MCF 10A (cell line): ENCODE measurements at regions of chr3 and their contacts with region 1.

Region 1: DNA sequence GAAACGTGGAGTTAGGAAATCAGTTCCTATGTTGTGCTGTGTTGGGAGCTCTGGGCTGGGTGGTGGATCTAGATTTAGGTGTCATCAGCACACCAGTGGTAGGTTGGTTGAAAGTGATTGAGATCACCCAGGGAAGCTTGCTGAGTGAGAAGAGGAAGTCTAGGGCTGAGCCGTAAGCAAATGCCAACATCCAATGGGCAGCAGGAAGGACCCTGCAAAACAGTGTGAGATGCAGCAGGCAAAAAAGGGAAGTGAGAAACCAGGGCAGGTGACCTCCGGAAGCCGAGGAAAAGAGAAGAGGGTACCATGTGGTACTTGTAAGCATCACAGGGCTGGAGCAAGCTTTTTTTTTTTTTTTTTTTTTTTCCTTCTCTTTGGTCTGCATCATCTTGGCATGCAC is 15.9 kb upstream of the COPG1 start:
- DNase-seq: no peak
- H3K4me3 Mint-ChIP-seq: no peak overlapping the region
- H3K27ac Mint-ChIP-seq: no peak overlapping the region
- H3K4me1 Mint-ChIP-seq: peaks cover 28% of the 10 kb centered on the region
- H3K27me3 Mint-ChIP-seq: no peaks in the 10 kb centered on the region
- CTCF ChIP-seq: no peak

Region 2: DNA sequence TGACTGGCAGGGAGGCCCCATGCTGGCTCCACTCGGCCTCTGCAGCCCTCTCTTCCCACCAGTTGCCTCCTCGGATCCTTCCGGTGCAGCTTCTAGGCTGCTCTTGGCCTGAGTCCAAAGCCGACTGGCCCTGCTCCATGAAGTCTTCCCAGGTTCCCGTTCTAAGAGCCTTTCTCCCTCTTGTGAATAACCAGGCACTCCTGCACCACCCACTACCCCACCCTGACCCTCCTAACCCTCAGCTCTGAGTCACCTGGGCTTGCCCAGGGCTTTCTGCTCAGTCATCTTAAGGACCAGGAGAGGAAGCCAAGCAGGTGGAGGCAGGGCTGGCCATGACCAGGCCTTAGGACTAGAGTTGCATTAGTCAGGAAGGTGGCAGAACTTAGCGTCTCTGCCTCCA is 21.8 kb before region 1 on chr3:
- CTCF ChIA-PET with region 1: no interaction called
- POLR2A ChIA-PET with region 1: interaction called, 11 read pairs
- intact Hi-C with region 1: no loop called
- DNase-seq: peak; percentile 98
- H3K4me3 Mint-ChIP-seq: peak overlapping the region; percentile 12
- H3K27ac Mint-ChIP-seq: peak overlapping the region; percentile 63
- H3K4me1 Mint-ChIP-seq: peaks cover 12% of the 10 kb centered on the region
- H3K27me3 Mint-ChIP-seq: no peaks in the 10 kb centered on the region
- CTCF ChIP-seq: no peak

Region 3: GRCh38 chr3:129409541-129409940 is 176.0 kb after region 1 on chr3:
- CTCF ChIA-PET with region 1: no interaction called
- POLR2A ChIA-PET with region 1: no interaction called
- intact Hi-C with region 1: no loop called
- DNase-seq: peak; percentile 32
- H3K4me3 Mint-ChIP-seq: no peak overlapping the region
- H3K27ac Mint-ChIP-seq: no peak overlapping the region
- H3K4me1 Mint-ChIP-seq: peaks cover 10% of the 10 kb centered on the region
- H3K27me3 Mint-ChIP-seq: no peaks in the 10 kb centered on the region
- CTCF ChIP-seq: no peak

Region 4: DNA sequence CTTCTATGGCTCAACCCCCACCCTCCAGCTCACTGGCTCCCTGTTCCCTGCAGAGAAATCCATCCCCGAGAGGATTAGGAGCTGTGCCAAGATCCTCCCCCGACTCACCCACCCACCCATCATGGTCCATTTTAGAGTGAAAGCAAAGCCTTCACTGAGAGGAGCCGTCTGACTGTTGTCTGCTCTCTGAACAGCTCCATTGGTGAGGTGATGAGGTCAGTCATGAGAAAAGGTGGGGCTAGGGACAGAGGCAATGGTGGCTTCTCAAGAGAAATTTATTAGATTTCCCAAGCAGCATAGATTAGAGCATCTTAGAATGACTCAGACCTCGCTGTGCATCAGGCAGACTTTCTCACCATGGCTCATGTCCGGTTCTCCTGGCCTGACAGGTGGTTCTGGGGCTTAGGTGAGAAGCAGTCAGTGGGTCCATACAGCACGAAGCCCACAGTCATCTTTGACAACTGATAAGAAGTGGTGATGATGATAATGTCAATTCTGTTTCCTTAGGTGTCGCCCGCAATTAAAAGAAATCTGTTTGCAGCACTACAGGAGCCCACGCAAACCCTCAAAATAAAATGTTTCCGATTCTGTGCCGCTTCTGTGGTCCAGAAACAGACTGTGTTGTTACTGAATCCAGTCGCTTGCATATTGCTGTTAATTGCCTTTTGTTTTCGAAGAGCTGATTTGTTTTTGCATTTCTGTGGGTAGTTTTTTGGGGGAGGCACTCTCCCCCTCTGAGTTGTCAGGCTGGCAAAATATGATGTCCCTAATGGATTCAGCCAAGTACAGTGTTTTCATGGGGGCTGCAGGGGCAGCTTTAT is 270.1 kb after region 1 on chr3:
- CTCF ChIA-PET with region 1: no interaction called
- POLR2A ChIA-PET with region 1: no interaction called
- intact Hi-C with region 1: no loop called
- DNase-seq: no peak
- H3K4me3 Mint-ChIP-seq: no peak overlapping the region
- H3K27ac Mint-ChIP-seq: no peak overlapping the region
- H3K4me1 Mint-ChIP-seq: no peaks in the 10 kb centered on the region
- H3K27me3 Mint-ChIP-seq: no peaks in the 10 kb centered on the region
- CTCF ChIP-seq: no peak